Left ventricle myocardium inferior (tissue), 1 donor: ENCODE measurements at regions of chr12 and their contacts with region 1.

Region 1: GRCh38 chr12:11648831-11649702 is at the start of gene ETV6:
- DNase-seq: peak; percentile 64
- H3K4me3 ChIP-seq: peak within 1 kb of the TSS; percentile 86
- H3K27ac ChIP-seq: peak within 1 kb of the TSS; percentile 99
- H3K4me1 ChIP-seq: peaks cover 46% of the 10 kb centered on the region
- H3K27me3 ChIP-seq: no peaks in the 10 kb centered on the region
- CTCF ChIP-seq: no peak
- total RNA-seq, gene ETV6: 16.9 TPM

Region 2: GRCh38 chr12:11758510-11759493 is 109.7 kb after region 1 on chr12:
- intact Hi-C with region 1: loop called (anchors 10 kb)
- DNase-seq: no peak
- H3K4me3 ChIP-seq: peak overlapping the region; percentile 22
- H3K27ac ChIP-seq: peak overlapping the region; percentile 84
- H3K4me1 ChIP-seq: peaks cover 88% of the 10 kb centered on the region
- H3K27me3 ChIP-seq: no peaks in the 10 kb centered on the region
- CTCF ChIP-seq: no peak

Region 3: DNA sequence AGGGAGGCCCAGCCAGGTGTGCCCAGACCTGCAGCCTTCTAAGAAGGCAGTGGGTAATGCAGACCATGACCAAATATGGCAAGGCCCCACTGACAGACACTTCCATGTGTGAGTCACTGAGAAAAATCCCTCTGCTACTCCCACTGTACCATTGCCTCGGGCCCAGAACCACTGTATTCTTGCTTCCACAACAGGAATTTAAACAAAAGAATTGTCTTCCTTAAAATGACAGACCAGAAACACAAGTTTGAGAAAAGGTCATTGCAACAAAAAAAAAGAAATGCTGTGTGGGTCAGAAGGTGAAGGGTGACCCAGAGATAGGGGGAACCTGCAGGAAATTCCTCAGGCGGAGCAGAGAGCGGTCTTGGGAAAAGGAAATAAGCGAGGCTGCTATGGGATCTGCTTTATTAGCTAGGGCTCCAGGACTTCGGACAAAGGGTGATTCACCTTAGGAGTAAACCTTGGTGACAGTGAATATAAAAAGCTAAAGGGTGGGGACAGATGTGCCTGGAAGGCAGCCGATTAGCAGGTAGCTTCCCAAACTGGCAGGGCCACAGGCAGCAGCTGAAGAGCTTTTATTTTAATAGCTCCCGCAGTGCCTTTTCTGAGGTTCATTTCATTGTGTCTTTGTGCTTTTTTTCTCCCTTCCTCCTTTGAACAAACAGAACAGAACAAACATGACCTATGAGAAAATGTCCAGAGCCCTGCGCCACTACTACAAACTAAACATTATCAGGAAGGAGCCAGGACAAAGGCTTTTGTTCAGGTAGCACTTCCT is 236.4 kb after region 1 on chr12:
- intact Hi-C with region 1: loop called (anchors 10 kb)
- DNase-seq: no peak
- H3K4me3 ChIP-seq: no peak overlapping the region
- H3K27ac ChIP-seq: peak overlapping the region; percentile 63
- H3K4me1 ChIP-seq: peaks cover 24% of the 10 kb centered on the region
- H3K27me3 ChIP-seq: no peaks in the 10 kb centered on the region
- CTCF ChIP-seq: no peak